Mammary epithelial cell (primary cell): ENCODE measurements at regions of chr19 and their contacts with region 1.

Region 1: GRCh38 chr19:58380722-58381466 is at the start of gene ZNF837:
- DNase-seq: peak; percentile 100
- H3K4me3 ChIP-seq: peak within 1 kb of the TSS; percentile 72 to 92 (median 84)
- H3K27ac ChIP-seq: peak within 1 kb of the TSS; percentile 95
- H3K4me1 ChIP-seq: peaks cover 24% of the 10 kb centered on the region
- H3K27me3 ChIP-seq: no peaks in the 10 kb centered on the region
- CTCF ChIP-seq: no peak
- total RNA-seq, gene ZNF837: 2.6 to 4.2 TPM

Region 2: DNA sequence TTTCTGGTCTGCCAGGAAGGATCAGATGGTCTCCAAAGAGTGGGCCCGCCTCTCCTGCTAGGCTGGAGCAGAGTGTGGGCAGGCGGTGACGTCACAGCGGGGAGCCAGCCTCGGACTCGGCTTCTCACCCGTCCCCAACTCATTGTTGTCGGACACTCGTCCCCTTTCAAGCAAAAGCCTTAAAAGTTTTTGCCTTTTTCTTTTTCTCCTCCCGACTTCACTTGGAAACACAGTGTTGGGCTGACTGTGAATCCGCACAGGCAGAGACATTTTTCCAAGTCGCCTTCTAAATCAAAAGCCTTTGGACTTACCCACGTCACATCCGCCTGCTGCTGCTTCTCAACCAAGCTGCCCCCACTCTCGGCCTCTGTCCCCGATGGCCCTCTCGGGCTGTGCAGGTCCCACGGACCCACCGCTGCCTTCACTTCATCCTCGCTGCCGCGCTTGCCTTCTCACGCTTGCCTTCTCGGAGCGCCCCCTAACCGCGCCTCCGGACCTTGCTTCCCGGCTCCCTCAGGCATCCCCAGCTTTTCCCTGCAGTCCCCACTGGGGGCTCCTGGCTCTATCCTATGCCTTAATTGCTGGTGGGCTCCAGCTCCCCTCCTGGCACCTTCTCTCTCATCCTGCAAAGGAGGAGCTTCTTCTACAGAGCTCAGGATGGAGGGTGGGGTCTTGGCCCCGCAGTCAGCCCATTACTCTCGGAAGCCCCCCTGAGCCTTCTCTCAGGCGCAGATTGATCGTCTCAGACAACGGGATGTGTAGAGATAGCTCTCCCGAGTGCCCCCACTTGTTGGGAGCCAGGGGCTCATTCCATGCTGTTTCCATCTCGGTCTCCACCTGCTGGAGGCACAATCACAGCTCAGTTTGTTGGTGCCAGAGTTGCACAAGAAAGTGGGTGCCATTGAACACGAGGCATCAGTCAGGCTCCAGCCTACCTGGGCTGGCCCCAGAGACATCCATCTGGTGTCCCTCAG is 325.7 kb before region 1 on chr19:
- CTCF ChIA-PET with region 1: no interaction called
- dilution Hi-C with region 1: no loop called
- in situ Hi-C with region 1: no loop called
- intact Hi-C with region 1: no loop called
- DNase-seq: no peak
- H3K4me3 ChIP-seq: peak overlapping the region in 2 of 3 experiments; percentile 28 to 30
- H3K27ac ChIP-seq: no peak overlapping the region
- H3K4me1 ChIP-seq: no peaks in the 10 kb centered on the region
- H3K27me3 ChIP-seq: no peaks in the 10 kb centered on the region
- CTCF ChIP-seq: no peak

Region 3: DNA sequence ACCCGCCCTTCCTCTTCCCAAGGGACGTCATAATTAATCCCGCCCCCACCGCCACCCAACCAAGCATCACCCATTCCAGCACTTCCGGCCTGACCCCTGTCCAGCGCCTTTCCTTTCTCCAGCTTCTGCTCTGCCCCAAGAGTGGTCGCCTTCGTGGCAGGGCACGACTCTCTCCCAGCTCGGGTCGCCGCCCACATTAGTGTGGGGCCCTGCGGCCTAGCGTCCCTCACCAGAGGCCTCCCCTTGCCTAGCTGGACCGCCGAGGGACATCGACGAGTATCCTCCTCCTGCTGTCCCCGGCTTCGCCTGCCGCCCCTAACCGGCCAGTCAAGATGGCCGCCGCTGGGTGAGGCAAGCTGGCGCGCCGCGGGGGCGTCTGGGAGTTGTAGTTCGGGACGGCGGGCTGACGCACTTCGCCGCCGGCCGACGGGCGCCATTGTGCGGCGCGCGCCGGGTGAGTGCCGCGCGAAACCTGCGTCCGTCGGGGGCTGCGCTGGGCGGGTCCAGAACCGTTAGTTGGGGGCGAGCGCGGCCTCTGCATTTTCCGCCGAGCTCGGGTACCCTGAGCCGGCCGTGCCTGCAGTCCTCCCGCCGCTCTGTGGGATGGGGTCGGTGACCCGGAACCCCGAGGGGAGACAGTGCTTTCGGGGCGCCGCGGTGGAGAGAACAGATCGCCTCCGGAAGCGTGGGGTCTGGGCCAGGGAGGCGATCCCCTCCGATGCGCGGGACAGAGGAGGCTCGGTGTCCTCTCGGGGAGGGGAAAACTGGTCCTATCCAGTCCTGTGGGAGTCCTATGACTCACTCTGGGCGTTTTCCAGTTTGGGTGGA is 197.7 kb before region 1 on chr19 and contains the start of gene ZNF274:
- CTCF ChIA-PET with region 1: no interaction called
- dilution Hi-C with region 1: no loop called
- in situ Hi-C with region 1: no loop called
- intact Hi-C with region 1: loop called (anchors 2 kb)
- DNase-seq: peak; percentile 90
- H3K4me3 ChIP-seq: peak within 1 kb of the TSS; percentile 81 to 97 (median 83)
- H3K27ac ChIP-seq: peak within 1 kb of the TSS; percentile 93
- H3K4me1 ChIP-seq: peaks cover 3% of the 10 kb centered on the region
- H3K27me3 ChIP-seq: no peaks in the 10 kb centered on the region
- CTCF ChIP-seq: no peak
- total RNA-seq, gene ZNF274: 15.7 to 33.8 TPM

Region 4: GRCh38 chr19:58315580-58315979 is 65.3 kb before region 1 on chr19:
- CTCF ChIA-PET with region 1: no interaction called
- dilution Hi-C with region 1: no loop called
- in situ Hi-C with region 1: no loop called
- intact Hi-C with region 1: no loop called
- DNase-seq: no peak
- H3K4me3 ChIP-seq: no peak overlapping the region
- H3K27ac ChIP-seq: no peak overlapping the region
- H3K4me1 ChIP-seq: peaks cover 13% of the 10 kb centered on the region
- H3K27me3 ChIP-seq: no peaks in the 10 kb centered on the region
- CTCF ChIP-seq: no peak

Region 5: GRCh38 chr19:58326914-58327726 is 53.8 kb before region 1 on chr19 and contains the start of gene ZSCAN22:
- CTCF ChIA-PET with region 1: no interaction called
- dilution Hi-C with region 1: no loop called
- in situ Hi-C with region 1: no loop called
- intact Hi-C with region 1: loop called (anchors 1 kb)
- DNase-seq: peak; percentile 97
- H3K4me3 ChIP-seq: peak within 1 kb of the TSS; percentile 56 to 100 (median 86)
- H3K27ac ChIP-seq: peak within 1 kb of the TSS; percentile 65
- H3K4me1 ChIP-seq: peaks cover 28% of the 10 kb centered on the region
- H3K27me3 ChIP-seq: no peaks in the 10 kb centered on the region
- CTCF ChIP-seq: no peak
- total RNA-seq, gene ZSCAN22: 3.2 to 3.7 TPM

Region 6: GRCh38 chr19:58362272-58362994 is 18.5 kb before region 1 on chr19 and contains the start of gene ZNF497:
- CTCF ChIA-PET with region 1: no interaction called
- dilution Hi-C with region 1: no loop called
- in situ Hi-C with region 1: no loop called
- intact Hi-C with region 1: loop called (anchors 1 kb)
- DNase-seq: peak; percentile 94
- H3K4me3 ChIP-seq: peak within 1 kb of the TSS; percentile 61 to 83 (median 64)
- H3K27ac ChIP-seq: peak within 1 kb of the TSS; percentile 84
- H3K4me1 ChIP-seq: peaks cover 8% of the 10 kb centered on the region
- H3K27me3 ChIP-seq: no peaks in the 10 kb centered on the region
- CTCF ChIP-seq: no peak
- total RNA-seq, gene ZNF497: 0.83 to 1.1 TPM

Region 7: GRCh38 chr19:58429745-58430144 is 48.9 kb after region 1 on chr19:
- CTCF ChIA-PET with region 1: no interaction called
- dilution Hi-C with region 1: loop called (anchors 5 kb)
- in situ Hi-C with region 1: no loop called
- intact Hi-C with region 1: no loop called
- DNase-seq: no peak
- H3K4me3 ChIP-seq: no peak overlapping the region
- H3K27ac ChIP-seq: no peak overlapping the region
- H3K4me1 ChIP-seq: peaks cover 17% of the 10 kb centered on the region
- H3K27me3 ChIP-seq: no peaks in the 10 kb centered on the region
- CTCF ChIP-seq: no peak

Region 8: GRCh38 chr19:58460039-58460438 is 79.1 kb after region 1 on chr19:
- CTCF ChIA-PET with region 1: no interaction called
- dilution Hi-C with region 1: loop called (anchors 5 kb)
- in situ Hi-C with region 1: no loop called
- intact Hi-C with region 1: no loop called
- DNase-seq: peak; percentile 73
- H3K4me3 ChIP-seq: no peak overlapping the region
- H3K27ac ChIP-seq: no peak overlapping the region
- H3K4me1 ChIP-seq: peaks cover 9% of the 10 kb centered on the region
- H3K27me3 ChIP-seq: no peaks in the 10 kb centered on the region
- CTCF ChIP-seq: no peak